ENCODE measurements at regions of chr6 and their contacts with region 1.

Region 1: GRCh38 chr6:136226027-136226673 is 24.0 kb downstream of the MTFR2 start:
- DNase-seq: peak; percentile 89
- H3K4me3 Mint-ChIP-seq: peak overlapping the region; percentile 25
- H3K27ac Mint-ChIP-seq: peak overlapping the region; percentile 44
- H3K4me1 Mint-ChIP-seq: peaks cover 22% of the 10 kb centered on the region
- H3K27me3 Mint-ChIP-seq: no peaks in the 10 kb centered on the region

Region 2: GRCh38 chr6:135451693-135452092 is 774.5 kb before region 1 on chr6:
- intact Hi-C with region 1: loop called (anchors 1 kb)
- DNase-seq: peak; percentile 63
- H3K4me3 Mint-ChIP-seq: no peak overlapping the region
- H3K27ac Mint-ChIP-seq: no peak overlapping the region
- H3K4me1 Mint-ChIP-seq: peaks cover 6% of the 10 kb centered on the region
- H3K27me3 Mint-ChIP-seq: no peaks in the 10 kb centered on the region

Region 3: DNA sequence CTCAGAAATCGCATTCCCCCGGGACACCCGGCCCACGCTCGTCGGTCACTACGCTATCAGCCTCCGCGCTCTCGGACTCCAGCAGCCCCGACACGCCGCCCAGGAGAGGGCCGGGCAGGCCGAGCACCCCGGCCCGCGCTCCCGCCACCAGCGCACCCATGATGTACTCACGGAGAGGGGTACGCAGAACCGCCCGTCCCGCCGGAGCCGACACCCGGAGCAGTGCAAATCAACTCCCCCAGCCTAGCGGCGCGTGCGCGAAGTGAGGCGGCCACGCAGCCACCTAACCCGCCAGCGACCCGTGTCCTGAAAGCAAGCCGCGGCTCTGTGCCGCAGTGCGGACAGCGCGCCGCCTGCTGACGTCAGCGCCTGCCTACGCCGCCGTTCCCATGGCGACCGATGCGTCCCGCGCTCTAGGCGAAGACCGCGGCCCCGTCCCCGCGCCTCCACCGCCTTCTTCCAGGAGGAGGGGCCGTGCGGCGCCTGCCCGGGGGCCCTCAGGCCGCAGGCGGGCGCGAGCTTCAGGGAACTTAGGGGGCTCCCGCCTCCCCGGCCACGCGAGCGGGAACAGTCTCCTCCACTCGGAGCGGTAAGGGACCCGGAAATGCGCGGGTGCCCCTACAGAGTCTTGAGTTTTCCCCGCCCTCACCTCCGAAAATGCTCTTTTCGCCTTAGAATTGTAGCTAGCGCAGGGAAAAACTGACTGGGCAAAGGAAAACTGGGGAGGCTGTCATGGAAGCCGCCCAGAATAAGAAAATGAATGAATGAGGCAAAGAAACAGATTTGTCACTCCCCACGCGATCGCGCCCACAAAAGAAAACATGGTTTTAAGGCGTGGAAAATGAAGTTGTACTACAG is 728.5 kb before region 1 on chr6 and contains the start of gene AHI1:
- intact Hi-C with region 1: loop called (anchors 2 kb)
- DNase-seq: peak; percentile 97
- H3K4me3 Mint-ChIP-seq: no peak within 1 kb of the TSS
- H3K27ac Mint-ChIP-seq: no peak within 1 kb of the TSS
- H3K4me1 Mint-ChIP-seq: peaks cover 18% of the 10 kb centered on the region
- H3K27me3 Mint-ChIP-seq: no peaks in the 10 kb centered on the region
- total RNA-seq, gene AHI1: 155 and 160 TPM in 2 replicates

Region 4: DNA sequence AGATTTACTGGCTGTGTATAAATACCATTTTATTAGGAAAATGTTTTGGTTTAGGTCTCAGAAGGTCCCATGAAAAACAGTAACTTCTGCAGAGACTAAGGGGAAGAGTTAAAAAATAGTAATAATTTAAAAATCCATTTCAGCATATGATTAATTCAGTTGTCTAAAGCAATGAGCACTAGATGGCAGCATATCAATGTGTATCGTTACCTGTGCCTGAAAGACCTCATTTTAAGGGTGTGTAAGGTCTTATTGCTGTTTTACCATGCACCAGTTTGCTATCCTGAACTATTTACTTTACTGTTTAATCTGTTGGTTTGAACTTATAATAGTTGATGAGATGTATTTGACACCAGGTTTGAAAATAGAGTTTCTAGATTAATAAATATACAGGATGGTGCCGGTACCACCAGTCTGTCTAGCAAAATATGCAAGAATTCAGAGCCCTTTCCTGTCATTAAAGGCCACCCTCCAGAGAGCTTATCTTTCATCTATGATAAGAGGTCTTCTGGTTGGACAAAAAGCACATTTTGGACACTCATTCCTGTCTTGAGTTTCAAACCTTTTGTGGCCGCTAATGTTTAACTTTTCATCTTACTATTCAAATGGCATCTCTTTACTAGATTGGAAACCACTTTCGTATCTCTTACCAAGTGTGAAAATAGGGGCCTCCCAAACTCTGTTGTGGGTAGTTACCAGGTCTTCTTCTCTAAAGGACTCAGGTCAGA is 719.7 kb before region 1 on chr6:
- intact Hi-C with region 1: loop called (anchors 1 kb)
- DNase-seq: peak; percentile 79
- H3K4me3 Mint-ChIP-seq: no peak overlapping the region
- H3K27ac Mint-ChIP-seq: peak overlapping the region; percentile 77
- H3K4me1 Mint-ChIP-seq: peaks cover 9% of the 10 kb centered on the region
- H3K27me3 Mint-ChIP-seq: no peaks in the 10 kb centered on the region

Region 5: GRCh38 chr6:135675862-135676261 is 550.3 kb before region 1 on chr6:
- intact Hi-C with region 1: loop called (anchors 1 kb)
- DNase-seq: peak; percentile 85
- H3K4me3 Mint-ChIP-seq: peak overlapping the region; percentile 32
- H3K27ac Mint-ChIP-seq: peak overlapping the region; percentile 74
- H3K4me1 Mint-ChIP-seq: peaks cover 39% of the 10 kb centered on the region
- H3K27me3 Mint-ChIP-seq: no peaks in the 10 kb centered on the region

Region 6: DNA sequence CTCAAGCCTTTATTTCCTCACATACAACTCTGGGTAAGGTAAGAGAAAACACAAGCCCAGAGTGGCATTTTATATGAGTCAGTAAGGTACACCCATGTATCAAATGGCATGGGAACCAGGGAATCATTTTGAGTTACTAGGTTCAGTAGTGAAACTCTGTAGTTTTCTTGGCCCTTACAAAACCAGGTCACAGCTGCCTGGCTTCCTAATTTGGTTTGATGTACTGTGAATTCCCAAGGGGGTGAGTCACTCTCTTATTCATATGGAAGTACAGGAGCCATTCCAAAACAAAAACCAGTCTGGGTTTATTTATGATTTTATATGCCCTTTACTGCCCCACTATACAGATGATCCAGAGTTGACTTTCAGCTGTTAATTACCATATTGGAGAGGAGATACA is 304.0 kb before region 1 on chr6:
- intact Hi-C with region 1: loop called (anchors 10 kb)
- DNase-seq: no peak
- H3K4me3 Mint-ChIP-seq: peak overlapping the region; percentile 2
- H3K27ac Mint-ChIP-seq: peak overlapping the region; percentile 51
- H3K4me1 Mint-ChIP-seq: peaks cover 28% of the 10 kb centered on the region
- H3K27me3 Mint-ChIP-seq: no peaks in the 10 kb centered on the region

Region 7: DNA sequence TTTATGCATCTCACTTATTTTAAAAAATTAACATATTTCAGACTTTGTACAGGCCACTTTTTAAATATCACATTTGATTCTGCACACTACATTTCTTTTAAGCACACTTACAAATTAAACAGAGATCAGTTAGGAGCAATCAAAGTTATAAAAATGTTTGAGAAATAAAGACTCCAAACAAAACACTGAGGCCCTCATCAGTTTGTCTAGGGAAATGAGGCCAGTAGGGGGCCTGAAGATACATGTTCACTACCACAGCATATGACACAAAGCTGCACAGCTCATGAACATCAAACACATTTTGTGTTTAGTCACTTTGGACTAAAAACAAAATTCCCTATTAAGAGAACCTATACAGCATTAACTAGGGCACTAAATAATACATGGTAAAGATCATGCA is 194.2 kb before region 1 on chr6:
- intact Hi-C with region 1: loop called (anchors 10 kb)
- DNase-seq: no peak
- H3K4me3 Mint-ChIP-seq: no peak overlapping the region
- H3K27ac Mint-ChIP-seq: no peak overlapping the region
- H3K4me1 Mint-ChIP-seq: peaks cover 2% of the 10 kb centered on the region
- H3K27me3 Mint-ChIP-seq: no peaks in the 10 kb centered on the region

Measured in activated CD4-positive, alpha-beta T cell treated with anti-CD3 and anti-CD28 coated beads, Interleukin-2, amount 10 ng/mL, durations not matched to agents 24 days and 14 days (primary cell).